Activated naive CD4-positive, alpha-beta T cell treated with anti-CD3 and anti-CD28 coated beads for 36 hours (primary cell): ENCODE measurements at regions of chr4 and their contacts with region 1.

Region 1: GRCh38 chr4:70704331-70705145 is 16.2 kb downstream of the UTP3 start:
- DNase-seq: peak; percentile 69
- H3K4me3 Mint-ChIP-seq: peak overlapping the region; percentile 81
- H3K27ac Mint-ChIP-seq: peak overlapping the region; percentile 85
- H3K4me1 Mint-ChIP-seq: peaks cover 27% of the 10 kb centered on the region
- H3K27me3 Mint-ChIP-seq: no peaks in the 10 kb centered on the region

Region 2: GRCh38 chr4:70754470-70754869 is 49.9 kb after region 1 on chr4:
- CTCF ChIA-PET with region 1: no interaction called
- intact Hi-C with region 1: loop called (anchors 2 kb)
- DNase-seq: no peak
- H3K4me3 Mint-ChIP-seq: no peak overlapping the region
- H3K27ac Mint-ChIP-seq: no peak overlapping the region
- H3K4me1 Mint-ChIP-seq: peaks cover 26% of the 10 kb centered on the region
- H3K27me3 Mint-ChIP-seq: no peaks in the 10 kb centered on the region

Region 3: GRCh38 chr4:70901984-70902576 is 197.5 kb after region 1 on chr4 and contains the start of gene MOB1B:
- CTCF ChIA-PET with region 1: no interaction called
- intact Hi-C with region 1: loop called (anchors 1 kb)
- DNase-seq: peak; percentile 92
- H3K4me3 Mint-ChIP-seq: peak within 1 kb of the TSS; percentile 88
- H3K27ac Mint-ChIP-seq: peak within 1 kb of the TSS; percentile 54
- H3K4me1 Mint-ChIP-seq: peaks cover 31% of the 10 kb centered on the region
- H3K27me3 Mint-ChIP-seq: no peaks in the 10 kb centered on the region
- total RNA-seq, gene MOB1B: 14.4 to 16.2 TPM

Region 4: GRCh38 chr4:70927502-70928137 is 223.1 kb after region 1 on chr4:
- CTCF ChIA-PET with region 1: no interaction called
- intact Hi-C with region 1: loop called (anchors 2 kb)
- DNase-seq: peak; percentile 73
- H3K4me3 Mint-ChIP-seq: peak overlapping the region; percentile 51
- H3K27ac Mint-ChIP-seq: peak overlapping the region; percentile 66
- H3K4me1 Mint-ChIP-seq: peaks cover 28% of the 10 kb centered on the region
- H3K27me3 Mint-ChIP-seq: no peaks in the 10 kb centered on the region